HepG2 (cell line): ENCODE measurements at regions of chr2 and their contacts with region 1.

Region 1: DNA sequence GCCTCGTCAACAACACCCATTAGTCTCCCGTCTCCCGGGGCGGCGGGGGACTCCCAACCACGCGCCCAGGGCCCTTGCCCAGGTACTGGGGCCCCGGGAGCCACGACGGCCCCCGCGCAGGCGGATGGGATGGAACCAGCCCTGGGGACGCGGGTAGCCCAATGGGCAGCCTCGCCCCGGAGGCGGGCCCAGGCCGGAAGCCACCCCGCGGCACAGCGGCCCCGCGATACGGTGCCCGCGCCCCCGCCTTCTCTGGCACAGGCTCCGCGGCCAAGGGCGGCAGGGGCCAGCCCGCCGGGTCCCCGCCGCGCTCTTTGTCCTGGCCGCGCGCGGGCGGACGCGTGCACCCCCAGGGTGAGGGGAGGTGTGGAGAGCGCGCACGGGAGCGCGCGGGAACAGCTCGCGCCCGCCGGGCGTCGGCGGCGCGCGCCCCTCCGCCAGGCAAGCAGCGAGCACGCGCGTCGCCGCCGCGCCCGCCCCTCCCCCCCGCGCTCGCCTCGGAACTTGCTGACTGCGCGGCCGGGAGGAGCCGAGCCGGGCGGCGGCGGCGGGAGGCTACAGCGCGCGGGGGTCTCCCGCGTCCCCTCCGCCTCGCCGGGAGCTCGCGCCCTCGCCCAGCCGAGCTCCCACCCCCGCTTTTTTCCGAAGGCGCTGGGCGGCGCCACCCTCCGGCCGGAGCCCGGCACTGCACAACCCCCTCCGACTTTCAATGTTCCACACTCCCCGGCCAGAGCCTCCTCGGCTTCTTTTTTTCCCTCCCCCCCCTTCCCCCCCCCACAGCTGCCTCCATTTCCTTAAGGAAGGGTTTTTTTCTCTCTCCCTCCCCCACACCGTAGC is at the start of gene UBE2E3:
- DNase-seq: peak; percentile 67
- ATAC-seq: peak; percentile 90
- H3K4me3 ChIP-seq: peak within 1 kb of the TSS; percentile 66 to 100 (median 86)
- H3K27ac ChIP-seq: peak within 1 kb of the TSS; percentile 57
- H3K4me1 ChIP-seq: peaks cover 57% of the 10 kb centered on the region
- H3K27me3 ChIP-seq: no peaks in the 10 kb centered on the region; a peak in 1 of 5 replicates
- CTCF ChIP-seq: peak; percentile 73
- EP300 ChIP-seq: no peak
- POLR2A ChIP-seq: peak; percentile 60 to 76
- RAD21 ChIP-seq: peak; percentile 85; the same call in 1 of the 2 replicates
- total RNA-seq, gene UBE2E3: 45.7 and 54.0 TPM in 2 replicates

Region 2: DNA sequence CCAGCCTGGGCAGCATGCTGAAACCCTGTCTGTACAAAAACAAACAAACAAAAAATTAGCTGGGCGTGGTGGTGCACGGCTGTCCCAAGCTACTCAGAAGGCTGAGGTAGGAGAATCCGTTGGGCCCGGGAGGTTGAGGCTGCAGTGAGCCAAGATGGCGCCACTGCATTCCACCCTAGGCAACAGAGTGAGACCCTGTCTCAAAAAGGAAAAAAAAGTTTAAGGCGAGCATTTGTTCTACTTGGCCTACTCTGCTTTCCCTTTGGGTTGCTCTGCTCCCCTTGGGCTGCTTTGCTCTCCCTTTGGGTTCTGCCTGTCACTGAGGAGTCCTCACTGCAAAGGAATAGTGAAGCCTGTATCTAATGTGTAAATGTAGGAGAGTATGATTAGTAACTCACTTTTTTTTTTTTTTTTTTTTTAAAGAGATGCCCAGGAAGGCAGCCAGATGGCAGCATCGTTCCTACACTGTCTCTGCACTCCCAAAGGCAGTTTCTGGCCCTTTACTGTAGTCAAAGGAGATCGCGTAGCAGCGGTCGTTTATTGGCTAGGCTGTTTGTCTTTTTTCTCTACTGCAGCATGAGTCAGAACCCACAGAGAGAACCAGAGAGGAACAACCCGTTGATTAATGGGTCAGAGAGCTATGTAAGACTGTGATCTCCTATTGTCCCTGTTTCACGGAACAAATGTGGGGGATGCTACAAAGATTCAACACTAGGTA is 854.9 kb before region 1 on chr2:
- CTCF ChIA-PET with region 1: no interaction called
- POLR2A ChIA-PET with region 1: no interaction called
- in situ Hi-C with region 1: no loop called
- intact Hi-C with region 1: loop called (anchors 1 kb)
- DNase-seq: peak; percentile 78
- ATAC-seq: peak; percentile 96
- H3K4me3 ChIP-seq: no peak overlapping the region; a peak in 1 of 6 replicates
- H3K27ac ChIP-seq: no peak overlapping the region
- H3K4me1 ChIP-seq: peaks cover 5% of the 10 kb centered on the region; the same call in 1 of the 2 replicates
- H3K27me3 ChIP-seq: no peaks in the 10 kb centered on the region
- CTCF ChIP-seq: peak; percentile 67
- EP300 ChIP-seq: no peak
- POLR2A ChIP-seq: no peak
- RAD21 ChIP-seq: 0 out of 2 replicates have a peak, but pooled peaks have one; percentile 20

Region 3: DNA sequence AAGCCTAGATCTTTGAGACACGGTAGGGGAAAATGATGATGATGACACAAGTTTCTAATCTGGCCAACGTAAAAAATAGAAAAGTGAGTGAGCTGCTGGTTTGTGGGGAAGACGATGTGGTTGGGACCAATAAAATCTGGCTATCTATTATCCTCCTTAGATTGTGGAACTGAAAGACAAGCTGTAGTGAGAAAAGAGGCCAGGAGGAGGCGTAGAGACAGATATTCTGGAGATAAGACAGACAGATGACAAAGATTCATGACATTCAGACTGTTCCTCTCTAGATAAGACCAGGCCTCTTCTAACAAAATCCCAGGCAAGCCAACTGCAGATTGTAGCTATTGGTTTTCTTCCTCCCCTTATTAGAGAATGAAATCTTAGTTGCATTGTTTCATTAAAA is 376.2 kb before region 1 on chr2:
- CTCF ChIA-PET with region 1: no interaction called
- POLR2A ChIA-PET with region 1: no interaction called
- in situ Hi-C with region 1: no loop called
- intact Hi-C with region 1: loop called (anchors 5 kb)
- DNase-seq: peak; percentile 35
- ATAC-seq: peak; percentile 82
- H3K4me3 ChIP-seq: no peak overlapping the region
- H3K27ac ChIP-seq: no peak overlapping the region
- H3K4me1 ChIP-seq: peaks cover 6% of the 10 kb centered on the region; the same call in 1 of the 2 replicates
- H3K27me3 ChIP-seq: no peaks in the 10 kb centered on the region
- CTCF ChIP-seq: peak; percentile 61
- EP300 ChIP-seq: no peak
- POLR2A ChIP-seq: no peak
- RAD21 ChIP-seq: no peak

Region 4: DNA sequence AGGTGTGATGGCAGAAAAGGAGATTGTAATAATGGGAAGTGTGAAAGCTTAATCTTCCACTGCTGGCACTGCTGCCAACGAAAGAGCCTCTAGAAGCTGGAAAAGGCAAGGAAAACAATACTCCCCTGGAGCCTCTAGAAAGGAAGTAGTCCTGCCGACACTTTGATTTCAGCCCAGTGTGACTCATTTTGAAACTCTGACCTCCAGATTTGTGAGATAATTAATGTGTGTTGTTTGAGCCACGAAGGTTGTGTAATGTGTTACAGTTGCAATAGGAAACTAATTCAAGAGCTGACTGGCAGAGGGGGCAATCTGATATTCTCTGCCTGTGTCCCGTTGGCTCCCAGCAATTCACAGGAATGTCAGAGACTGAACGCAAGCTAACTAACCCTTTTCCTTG is 219.1 kb before region 1 on chr2:
- CTCF ChIA-PET with region 1: no interaction called
- POLR2A ChIA-PET with region 1: interaction called, 3 read pairs
- in situ Hi-C with region 1: loop called (anchors 10 kb)
- intact Hi-C with region 1: loop called (anchors 2 kb)
- DNase-seq: peak; percentile 89
- ATAC-seq: peak; percentile 81
- H3K4me3 ChIP-seq: no peak overlapping the region
- H3K27ac ChIP-seq: no peak overlapping the region
- H3K4me1 ChIP-seq: peaks cover 57% of the 10 kb centered on the region
- H3K27me3 ChIP-seq: no peaks in the 10 kb centered on the region
- CTCF ChIP-seq: no peak
- EP300 ChIP-seq: peak; percentile 44 to 80; a peak in 2 of 4 replicates
- POLR2A ChIP-seq: no peak
- RAD21 ChIP-seq: no peak

Region 5: DNA sequence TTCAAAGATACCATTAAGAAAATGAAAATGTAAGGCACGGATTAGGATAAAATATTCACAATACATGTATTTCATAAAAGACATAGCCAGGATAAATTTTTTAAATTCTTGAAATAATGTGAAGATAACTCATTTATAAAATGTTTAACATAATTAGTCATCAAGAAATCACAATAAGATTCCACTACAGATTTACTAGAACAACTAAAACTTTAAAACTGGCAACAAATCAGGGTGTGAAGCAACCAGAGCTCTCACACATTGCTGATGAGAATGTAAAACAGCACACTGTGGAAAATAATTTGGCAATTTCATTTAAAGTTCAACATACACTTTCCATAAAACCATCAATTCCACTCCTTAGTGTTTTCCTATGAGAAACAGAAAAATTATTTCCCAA is 89.5 kb before region 1 on chr2:
- CTCF ChIA-PET with region 1: no interaction called
- POLR2A ChIA-PET with region 1: no interaction called
- in situ Hi-C with region 1: no loop called
- intact Hi-C with region 1: no loop called
- DNase-seq: no peak
- ATAC-seq: no peak
- H3K4me3 ChIP-seq: no peak overlapping the region
- H3K27ac ChIP-seq: no peak overlapping the region
- H3K4me1 ChIP-seq: no peaks in the 10 kb centered on the region
- H3K27me3 ChIP-seq: no peaks in the 10 kb centered on the region
- CTCF ChIP-seq: no peak
- EP300 ChIP-seq: no peak
- POLR2A ChIP-seq: no peak
- RAD21 ChIP-seq: no peak

Region 6: DNA sequence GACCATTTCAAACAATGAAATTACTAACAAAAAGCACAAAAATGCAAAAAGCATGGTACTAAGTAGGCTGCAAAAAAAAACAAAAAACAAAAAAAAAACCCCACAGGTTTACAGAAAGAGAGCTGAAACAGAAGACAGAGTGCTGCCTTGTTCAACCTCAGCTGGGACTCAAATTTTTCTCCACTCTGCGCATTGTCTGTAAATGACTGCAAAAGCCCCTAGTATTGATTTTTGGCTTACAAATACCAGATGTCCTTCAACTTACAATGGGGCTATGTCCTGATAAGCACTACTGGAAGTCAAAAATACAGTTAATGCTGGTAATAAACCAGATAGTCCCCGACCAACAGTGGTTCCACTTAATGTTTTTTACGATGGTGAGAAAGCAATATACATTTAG is 42.3 kb after region 1 on chr2:
- CTCF ChIA-PET with region 1: no interaction called
- POLR2A ChIA-PET with region 1: no interaction called
- in situ Hi-C with region 1: no loop called
- intact Hi-C with region 1: loop called (anchors 5 kb)
- DNase-seq: peak; percentile 78
- ATAC-seq: peak; percentile 99
- H3K4me3 ChIP-seq: no peak overlapping the region
- H3K27ac ChIP-seq: peak overlapping the region; percentile 31
- H3K4me1 ChIP-seq: peaks cover 13% of the 10 kb centered on the region
- H3K27me3 ChIP-seq: no peaks in the 10 kb centered on the region
- CTCF ChIP-seq: no peak
- EP300 ChIP-seq: peak; percentile 17 to 48; a peak in 1 of 4 replicates
- POLR2A ChIP-seq: no peak
- RAD21 ChIP-seq: no peak

Region 7: GRCh38 chr2:181036445-181036844 is 56.1 kb after region 1 on chr2:
- CTCF ChIA-PET with region 1: no interaction called
- POLR2A ChIA-PET with region 1: no interaction called
- in situ Hi-C with region 1: no loop called
- intact Hi-C with region 1: no loop called
- DNase-seq: no peak
- ATAC-seq: no peak
- H3K4me3 ChIP-seq: no peak overlapping the region
- H3K27ac ChIP-seq: no peak overlapping the region
- H3K4me1 ChIP-seq: no peaks in the 10 kb centered on the region
- H3K27me3 ChIP-seq: no peaks in the 10 kb centered on the region
- CTCF ChIP-seq: no peak
- EP300 ChIP-seq: no peak
- POLR2A ChIP-seq: no peak
- RAD21 ChIP-seq: no peak

Region 8: DNA sequence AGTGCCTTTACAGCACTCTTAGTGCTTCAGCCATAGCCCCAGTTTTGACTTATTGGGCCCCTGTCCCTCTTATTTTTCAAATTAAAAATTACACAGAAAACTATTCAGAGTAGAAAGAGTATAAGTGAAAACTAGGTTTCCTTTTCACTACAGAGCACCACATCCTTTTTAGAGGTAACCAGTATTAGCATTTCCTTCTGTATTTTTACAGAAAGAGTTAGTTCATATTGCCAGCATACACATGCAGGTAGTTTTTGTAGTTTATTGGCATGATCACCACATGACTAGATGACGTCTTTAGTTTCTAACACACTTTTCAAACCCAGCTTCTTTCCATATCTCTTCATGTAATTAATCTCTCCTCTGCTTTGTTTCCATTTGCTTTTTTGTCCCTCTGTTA is 66.5 kb after region 1 on chr2:
- CTCF ChIA-PET with region 1: no interaction called
- POLR2A ChIA-PET with region 1: no interaction called
- in situ Hi-C with region 1: no loop called
- intact Hi-C with region 1: no loop called
- DNase-seq: no peak
- ATAC-seq: no peak
- H3K4me3 ChIP-seq: no peak overlapping the region
- H3K27ac ChIP-seq: no peak overlapping the region
- H3K4me1 ChIP-seq: no peaks in the 10 kb centered on the region
- H3K27me3 ChIP-seq: no peaks in the 10 kb centered on the region
- CTCF ChIP-seq: no peak
- EP300 ChIP-seq: no peak
- POLR2A ChIP-seq: no peak
- RAD21 ChIP-seq: no peak